ENCODE measurements at regions of chrX and their contacts with region 1.

Region 1: DNA sequence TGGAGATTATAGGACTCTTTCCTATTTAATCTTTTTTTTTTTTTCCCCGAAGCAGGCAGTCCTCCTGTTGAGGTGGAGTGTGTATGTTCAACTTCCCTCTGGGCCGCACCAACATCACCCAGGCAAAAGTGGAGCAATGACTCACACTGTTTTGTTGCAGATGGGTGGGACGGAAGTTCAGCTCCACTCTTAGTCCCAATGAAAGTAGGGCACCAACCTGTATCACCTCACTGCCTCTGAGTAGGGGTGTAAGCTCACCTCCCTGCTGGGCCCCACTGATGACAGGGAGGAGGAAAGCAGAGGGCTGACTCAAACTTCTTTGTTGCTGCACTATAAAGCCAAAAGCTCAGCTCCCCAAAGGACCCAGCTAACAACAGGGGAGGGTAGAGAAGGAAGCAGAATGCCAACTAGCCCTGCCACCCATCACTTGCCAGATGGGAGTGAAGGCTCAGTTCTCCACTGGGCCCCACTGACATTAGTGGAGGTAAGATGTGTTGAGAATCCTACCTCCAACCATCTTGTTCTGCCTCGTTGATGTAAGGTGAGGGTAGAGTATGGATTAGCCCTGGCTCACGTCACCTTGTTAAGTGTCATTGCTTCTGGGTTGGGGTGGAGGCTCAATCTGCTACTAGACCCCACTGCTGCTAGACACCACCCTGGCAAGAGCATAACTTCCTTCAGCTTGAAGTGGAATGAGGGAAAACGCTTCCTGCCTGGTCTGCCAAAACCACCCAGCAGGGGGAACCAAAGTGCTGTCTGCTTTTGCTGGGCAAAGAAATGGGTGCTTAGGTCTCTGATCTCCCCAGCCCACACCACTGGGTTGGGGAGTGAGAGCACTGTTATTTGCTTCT is 14.1 kb downstream of the RPS6KA3 start:
- DNase-seq: peak; percentile 40 to 75
- H3K4me3 ChIP-seq: no peak overlapping the region
- H3K4me1 ChIP-seq: peaks cover 16% of the 10 kb centered on the region
- H3K27me3 ChIP-seq: no peaks in the 10 kb centered on the region

Region 2: DNA sequence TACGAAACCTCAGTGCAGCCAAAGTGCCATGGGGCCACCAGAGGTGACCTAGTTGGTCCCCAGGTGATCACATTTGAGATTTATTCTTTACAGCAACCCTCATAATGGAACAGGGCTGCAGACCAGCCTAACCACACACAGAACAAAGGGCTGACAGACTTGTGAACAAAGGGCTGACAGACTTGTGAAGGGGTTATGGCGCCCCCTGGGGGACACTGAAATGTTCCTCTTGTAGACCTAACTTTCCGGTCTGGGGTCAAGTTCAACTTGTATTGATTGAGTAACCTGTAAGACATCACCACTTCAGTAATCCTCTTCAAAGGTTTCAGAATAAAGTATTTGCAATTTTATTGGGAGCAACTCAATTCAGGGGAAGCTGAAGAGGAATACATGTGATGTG is 190.0 kb after region 1 on chrX:
- in situ Hi-C with region 1: loop called (anchors 10 kb)
- DNase-seq: peak; percentile 73 to 93
- H3K4me3 ChIP-seq: no peak overlapping the region
- H3K4me1 ChIP-seq: no peaks in the 10 kb centered on the region
- H3K27me3 ChIP-seq: no peaks in the 10 kb centered on the region

Region 3: DNA sequence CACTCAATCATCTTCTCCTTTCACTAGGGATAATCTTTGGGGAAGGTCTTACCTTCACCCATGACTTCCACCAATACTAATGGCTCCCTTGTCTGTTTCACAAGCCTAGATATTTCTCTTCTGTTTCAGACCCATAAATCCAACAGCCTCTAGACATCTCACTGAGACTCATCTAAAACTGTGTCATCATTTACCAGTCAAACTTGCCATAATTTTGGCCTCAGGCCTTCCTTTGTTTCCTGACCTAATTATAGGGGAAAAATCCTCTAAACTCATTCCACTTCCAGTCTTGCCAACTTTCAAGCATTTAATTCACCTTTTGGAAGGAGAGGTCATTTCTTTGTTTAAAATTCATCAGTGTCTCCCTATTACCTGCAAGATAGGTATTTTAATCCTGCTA is 940.6 kb after region 1 on chrX:
- in situ Hi-C with region 1: no loop called
- DNase-seq: no peak
- H3K4me3 ChIP-seq: no peak overlapping the region
- H3K4me1 ChIP-seq: no peaks in the 10 kb centered on the region
- H3K27me3 ChIP-seq: no peaks in the 10 kb centered on the region